ENCODE measurements at regions of chr19 and their contacts with region 1.

Region 1: GRCh38 chr19:44212250-44212865 is at the start of gene ZNF227:
- DNase-seq: peak; percentile 96
- H3K4me3 ChIP-seq: peak within 1 kb of the TSS; percentile 72 to 95 (median 95)
- H3K27ac ChIP-seq: peak within 1 kb of the TSS; percentile 57
- H3K4me1 ChIP-seq: no peaks in the 10 kb centered on the region
- H3K27me3 ChIP-seq: no peaks in the 10 kb centered on the region
- CTCF ChIP-seq: no peak
- total RNA-seq, gene ZNF227: 11.1 to 12.8 TPM

Region 2: DNA sequence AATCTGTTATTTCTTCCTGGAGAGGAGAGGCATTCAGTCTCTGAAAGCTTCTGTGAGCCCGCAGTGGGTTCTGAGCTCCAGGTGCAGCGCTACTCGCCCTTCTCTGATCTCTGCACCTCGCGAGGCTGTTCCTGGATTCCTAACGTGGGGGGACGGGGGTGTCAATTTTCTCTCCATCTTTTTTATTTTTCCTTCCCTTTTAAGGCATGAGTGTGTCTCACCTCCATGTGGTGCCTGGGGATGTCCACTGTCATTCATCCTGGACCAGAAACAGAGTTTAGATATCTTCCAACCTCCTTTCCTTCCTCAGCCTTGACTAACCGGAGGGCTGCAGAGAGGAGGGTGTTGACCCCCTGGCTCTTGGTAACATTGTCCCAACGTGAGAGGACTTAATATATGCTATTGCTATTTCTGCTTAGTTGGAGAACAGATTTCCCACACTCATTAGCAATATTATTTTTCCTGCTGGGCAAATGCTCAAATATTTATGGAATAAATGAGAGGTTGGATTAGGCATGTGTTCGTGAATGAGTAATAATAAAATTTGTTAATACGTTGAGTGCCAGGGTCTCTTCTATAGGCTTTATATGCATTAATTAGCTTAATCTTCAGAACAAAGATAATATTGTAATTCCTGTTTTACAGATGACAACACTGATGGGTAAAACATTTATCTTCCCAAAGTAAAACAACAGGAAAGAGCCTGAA is 48.2 kb after region 1 on chr19:
- CTCF ChIA-PET with region 1: no interaction called
- dilution Hi-C with region 1: no loop called
- in situ Hi-C with region 1: no loop called
- intact Hi-C with region 1: no loop called
- DNase-seq: no peak
- H3K4me3 ChIP-seq: peak overlapping the region; percentile 22 to 46 (median 43)
- H3K27ac ChIP-seq: no peak overlapping the region
- H3K4me1 ChIP-seq: peaks cover 8% of the 10 kb centered on the region
- H3K27me3 ChIP-seq: no peaks in the 10 kb centered on the region
- CTCF ChIP-seq: no peak

Region 3: DNA sequence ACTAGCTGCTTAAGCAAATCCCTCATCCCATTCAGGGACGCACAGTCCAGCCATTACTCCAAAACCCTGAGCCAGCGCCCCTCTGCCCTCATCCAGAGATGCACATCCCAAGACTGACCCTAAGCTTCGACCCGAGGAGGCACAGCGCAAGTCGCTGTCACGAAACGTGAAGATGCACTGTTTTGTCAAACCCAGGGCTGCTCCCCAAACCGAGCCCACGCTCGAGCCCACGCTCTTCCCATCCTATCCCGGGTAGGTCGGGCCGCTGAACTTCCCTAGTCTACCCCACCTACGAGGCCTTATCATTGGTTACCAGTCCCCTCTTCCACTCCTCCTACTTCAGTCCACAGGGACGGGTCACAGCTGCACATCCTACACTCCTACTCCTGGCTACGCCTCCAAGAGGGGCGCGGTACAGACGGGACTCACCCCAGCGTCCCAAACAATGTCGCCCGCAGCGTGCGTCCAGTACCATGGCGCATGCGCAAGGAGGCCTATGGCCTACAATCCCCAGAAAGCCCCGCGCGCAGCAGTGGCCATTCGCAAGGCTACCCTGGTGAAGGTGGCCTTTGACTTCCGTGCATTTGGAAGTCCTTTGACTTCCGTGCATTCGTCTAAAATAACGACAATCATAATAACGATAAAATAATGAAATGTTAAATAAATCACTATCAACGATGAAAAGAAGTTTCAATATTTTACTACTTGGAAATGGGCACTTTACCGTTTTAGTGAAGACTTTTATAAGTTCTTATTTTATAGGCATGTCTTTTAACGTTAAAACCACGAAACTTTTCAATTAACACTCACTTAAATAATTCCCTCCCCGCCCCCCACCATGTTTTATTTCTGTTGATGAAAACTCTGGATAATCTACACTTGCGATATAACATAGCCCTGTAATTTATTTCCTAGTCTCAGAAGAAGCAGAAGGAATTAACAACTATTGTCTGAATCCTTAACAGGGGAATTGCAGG is 189.1 kb after region 1 on chr19 and contains the start of gene ZNF285:
- CTCF ChIA-PET with region 1: no interaction called
- dilution Hi-C with region 1: no loop called
- in situ Hi-C with region 1: no loop called
- intact Hi-C with region 1: loop called (anchors 1 kb)
- DNase-seq: peak; percentile 95
- H3K4me3 ChIP-seq: peak within 1 kb of the TSS; percentile 61 to 82 (median 69)
- H3K27ac ChIP-seq: no peak within 1 kb of the TSS
- H3K4me1 ChIP-seq: no peaks in the 10 kb centered on the region
- H3K27me3 ChIP-seq: no peaks in the 10 kb centered on the region
- CTCF ChIP-seq: no peak
- total RNA-seq, gene ZNF285: 2.7 to 2.8 TPM

Region 4: DNA sequence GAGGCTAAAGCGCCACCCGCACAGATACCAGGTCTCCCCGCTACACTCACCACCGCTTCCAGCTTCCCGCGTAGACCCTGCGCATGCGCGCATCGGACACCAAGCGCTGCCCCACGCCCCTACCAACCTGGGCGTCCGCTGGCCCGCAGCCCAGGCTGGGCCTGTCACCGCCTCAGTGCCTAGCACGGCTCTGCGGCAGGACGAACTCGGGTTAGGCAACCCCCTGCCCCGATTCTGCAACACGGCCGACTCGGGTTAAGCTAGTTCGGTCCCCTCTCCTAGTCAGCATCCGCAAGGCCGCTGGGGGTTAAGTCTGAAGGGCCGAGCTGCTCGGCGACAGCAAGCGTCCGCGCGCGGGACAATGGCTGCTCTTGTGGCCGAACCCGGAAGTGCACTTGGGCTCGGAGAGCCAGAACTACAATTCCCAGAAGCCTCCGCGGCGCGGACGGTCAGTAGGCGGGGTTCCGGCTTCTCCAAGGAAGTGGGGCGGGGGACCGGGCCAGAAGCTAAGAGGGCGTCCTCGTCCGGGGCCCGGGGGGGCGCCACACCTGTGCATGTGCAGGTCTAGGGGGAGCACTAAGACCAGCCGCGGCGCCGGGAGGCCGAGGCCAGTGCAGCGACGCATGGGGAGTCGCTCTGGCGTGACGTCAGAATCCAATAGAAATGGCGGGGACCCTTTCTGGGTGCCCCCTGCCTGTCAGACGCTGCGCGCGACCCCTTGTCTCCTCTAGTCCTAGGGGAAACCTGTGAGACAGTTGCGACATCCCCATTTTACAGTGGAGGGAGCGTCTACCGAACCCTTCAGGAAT is 288.0 kb after region 1 on chr19 and contains the start of gene ZNF180:
- CTCF ChIA-PET with region 1: no interaction called
- dilution Hi-C with region 1: no loop called
- in situ Hi-C with region 1: no loop called
- intact Hi-C with region 1: loop called (anchors 2 kb)
- DNase-seq: peak; percentile 92
- H3K4me3 ChIP-seq: peak within 1 kb of the TSS; percentile 71 to 85 (median 85)
- H3K27ac ChIP-seq: peak within 1 kb of the TSS; percentile 78
- H3K4me1 ChIP-seq: peaks cover 8% of the 10 kb centered on the region
- H3K27me3 ChIP-seq: no peaks in the 10 kb centered on the region
- CTCF ChIP-seq: peak; percentile 5 to 49
- total RNA-seq, gene ZNF180: 7.1 to 7.2 TPM